Prostate gland (tissue), 2 donors: ENCODE measurements at regions of chr11 and their contacts with region 1.

Region 1: DNA sequence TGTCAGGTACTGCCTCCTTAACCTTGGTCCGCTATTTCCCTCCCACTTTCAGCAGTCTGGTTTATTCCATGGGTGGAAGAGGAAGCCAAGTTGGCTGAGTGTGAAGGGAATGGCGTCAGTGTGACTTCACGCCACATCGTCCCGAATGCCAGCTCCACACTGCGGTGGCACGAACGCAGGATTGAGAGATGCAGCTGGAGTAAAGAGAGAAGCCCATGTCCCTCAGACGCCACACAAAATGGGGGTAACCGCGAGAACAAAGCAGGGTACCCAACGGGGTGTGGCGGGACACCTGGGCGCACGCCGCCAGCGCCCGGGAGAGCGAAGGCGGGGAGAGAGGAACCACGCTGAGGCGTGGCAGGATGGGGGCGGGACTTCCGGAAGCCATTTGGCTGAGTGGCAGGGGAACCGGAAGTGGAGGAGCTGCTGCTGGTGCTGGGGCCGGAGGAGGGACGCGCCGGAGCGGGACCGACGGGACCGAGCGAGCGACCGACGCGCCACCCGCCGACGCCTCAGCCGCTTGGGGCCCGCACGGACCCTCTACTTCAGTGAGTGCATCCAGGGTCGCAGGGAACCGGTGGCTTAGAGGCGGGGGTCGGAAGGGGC is at the start of gene PAFAH1B2:
- DNase-seq: peak; percentile 95
- H3K4me3 ChIP-seq: peak within 1 kb of the TSS; percentile 94 to 95
- H3K27ac ChIP-seq: peak within 1 kb of the TSS; percentile 86 to 97
- H3K4me1 ChIP-seq: no peaks in the 10 kb centered on the region
- H3K27me3 ChIP-seq: no peaks in the 10 kb centered on the region
- CTCF ChIP-seq: no peak
- POLR2A ChIP-seq: peak; percentile 88
- total RNA-seq, gene PAFAH1B2: 72.5 to 126 TPM

Region 2: GRCh38 chr11:117178210-117179034 is 34.4 kb after region 1 on chr11 and contains the start of gene SIDT2:
- intact Hi-C with region 1: loop called (anchors 5 kb)
- DNase-seq: peak; percentile 94
- H3K4me3 ChIP-seq: peak within 1 kb of the TSS; percentile 96 to 99
- H3K27ac ChIP-seq: peak within 1 kb of the TSS; percentile 98 to 99
- H3K4me1 ChIP-seq: peaks cover 15% of the 10 kb centered on the region
- H3K27me3 ChIP-seq: no peaks in the 10 kb centered on the region
- CTCF ChIP-seq: peak in 1 of 4 experiments; percentile 19
- POLR2A ChIP-seq: peak; percentile 97
- total RNA-seq, gene SIDT2: 69.5 to 144 TPM

Region 3: GRCh38 chr11:117232092-117232878 is 88.3 kb after region 1 on chr11 and contains the start of gene RNF214:
- intact Hi-C with region 1: loop called (anchors 5 kb)
- DNase-seq: peak; percentile 67
- H3K4me3 ChIP-seq: peak within 1 kb of the TSS; percentile 69 to 80
- H3K27ac ChIP-seq: peak within 1 kb of the TSS; percentile 88 to 91
- H3K4me1 ChIP-seq: no peaks in the 10 kb centered on the region
- H3K27me3 ChIP-seq: no peaks in the 10 kb centered on the region
- CTCF ChIP-seq: peak; percentile 91 to 99 (median 98)
- POLR2A ChIP-seq: peak; percentile 5
- total RNA-seq, gene RNF214: 9.4 to 24.8 TPM

Region 4: GRCh38 chr11:117290809-117291396 is 146.9 kb after region 1 on chr11 and contains the start of gene BACE1-AS:
- intact Hi-C with region 1: no loop called
- DNase-seq: no peak
- H3K4me3 ChIP-seq: no peak within 1 kb of the TSS
- H3K27ac ChIP-seq: no peak within 1 kb of the TSS
- H3K4me1 ChIP-seq: no peaks in the 10 kb centered on the region
- H3K27me3 ChIP-seq: no peaks in the 10 kb centered on the region
- CTCF ChIP-seq: no peak
- POLR2A ChIP-seq: no peak
- total RNA-seq, gene BACE1-AS: 4.8 to 19.1 TPM